T-cell (primary cell): ENCODE measurements at regions of chr9 and their contacts with region 1.

Region 1: DNA sequence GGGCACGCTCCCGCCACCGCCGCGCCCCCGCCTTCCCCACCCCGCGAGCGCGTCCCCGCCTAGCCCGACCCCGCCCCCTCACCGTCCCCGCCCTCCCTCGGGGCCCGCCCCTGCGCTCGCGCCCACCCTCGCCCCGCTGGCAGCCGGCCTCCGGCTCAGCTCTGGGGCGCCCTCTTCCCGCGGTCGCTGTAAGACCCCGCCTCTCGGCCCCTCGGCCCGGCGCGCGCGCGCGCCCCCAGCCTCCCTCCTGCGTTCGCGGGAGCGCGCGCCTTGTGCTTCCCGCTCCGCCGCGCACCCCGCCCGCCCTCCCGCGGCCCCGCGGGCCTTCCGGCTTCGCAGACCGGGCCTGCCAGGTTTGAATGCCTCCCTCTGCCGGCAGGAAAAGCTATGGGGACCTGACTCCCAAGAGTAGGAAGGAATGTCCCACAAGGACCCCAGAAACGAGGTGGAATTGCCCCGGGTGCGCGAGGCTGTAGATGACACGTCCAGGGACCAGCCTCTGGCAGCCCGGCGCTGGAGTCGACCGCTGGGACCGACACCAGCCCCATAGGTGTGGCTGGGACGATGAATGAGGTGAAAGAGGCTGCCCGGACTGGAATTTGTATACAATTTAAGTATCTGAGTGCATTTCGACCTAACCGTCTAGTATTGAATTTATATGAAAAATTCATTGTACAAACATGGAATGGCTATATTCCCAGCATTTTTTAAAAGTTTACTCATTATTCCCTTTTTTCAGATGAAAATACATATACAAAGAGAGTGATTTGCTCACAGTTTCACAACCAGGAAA is 416 bp upstream of the PTBP3 start:
- DNase-seq: peak in 34 of 35 experiments; percentile 80 to 96 (median 88)
- ATAC-seq: peak; percentile 84 to 90 (median 86)
- H3K4me3 ChIP-seq: peak overlapping the region; percentile 82 to 85
- H3K4me3 Mint-ChIP-seq: peak overlapping the region; percentile 76 to 95 (median 90)
- H3K27ac ChIP-seq: peak overlapping the region; percentile 91
- H3K27ac Mint-ChIP-seq: peak overlapping the region; percentile 85 to 96
- H3K4me1 ChIP-seq: peaks cover 13 to 29% of the 10 kb centered on the region in 2 experiments
- H3K4me1 Mint-ChIP-seq: peaks cover 30 to 43% (median 38%) of the 10 kb centered on the region in 3 donors
- H3K27me3 ChIP-seq: no peaks in the 10 kb centered on the region
- H3K27me3 Mint-ChIP-seq: no peaks in the 10 kb centered on the region

Region 2: GRCh38 chr9:111525056-111525977 is 808.5 kb before region 1 on chr9 and contains the start of gene ZNF483:
- CTCF ChIA-PET with region 1: no interaction called
- POLR2A ChIA-PET with region 1: interaction called in 1 of 2 experiments, 11 read pairs
- DNase-seq: peak; percentile 57 to 88 (median 74)
- ATAC-seq: peak; percentile 80 to 94 (median 82)
- H3K4me3 ChIP-seq: peak within 1 kb of the TSS; percentile 75 to 92
- H3K4me3 Mint-ChIP-seq: peak within 1 kb of the TSS; percentile 79 to 94 (median 92)
- H3K27ac ChIP-seq: peak within 1 kb of the TSS; percentile 81
- H3K27ac Mint-ChIP-seq: peak within 1 kb of the TSS; percentile 87 to 95
- H3K4me1 ChIP-seq: peaks cover 0 to 14% of the 10 kb centered on the region in 2 experiments
- H3K4me1 Mint-ChIP-seq: peaks cover 25 to 31% (median 29%) of the 10 kb centered on the region in 3 donors
- H3K27me3 ChIP-seq: peaks cover 0 to 2% of the 10 kb centered on the region in 2 experiments
- H3K27me3 Mint-ChIP-seq: peaks cover 0 to 4% of the 10 kb centered on the region in 2 donors
- total RNA-seq, gene ZNF483: 13.5 to 21.5 (median 16.5) TPM